PC-9 (cell line): ENCODE measurements at regions of chr19 and their contacts with region 1.

Region 1: GRCh38 chr19:8050274-8051096 is 2.1 kb upstream of the CCL25 start:
- DNase-seq: peak; percentile 59 to 76
- H3K4me3 ChIP-seq: no peak overlapping the region
- H3K27ac ChIP-seq: no peak overlapping the region
- H3K4me1 ChIP-seq: no peaks in the 10 kb centered on the region
- H3K27me3 ChIP-seq: peaks cover 10% of the 10 kb centered on the region
- CTCF ChIP-seq: no peak

Region 2: GRCh38 chr19:8028951-8029491 is 21.5 kb before region 1 on chr19:
- CTCF ChIA-PET with region 1: no interaction called
- POLR2A ChIA-PET with region 1: interaction called, 10 read pairs
- intact Hi-C with region 1: no loop called
- DNase-seq: no peak
- H3K4me3 ChIP-seq: no peak overlapping the region
- H3K27ac ChIP-seq: no peak overlapping the region
- H3K4me1 ChIP-seq: 0 out of 2 replicates have a peak, but pooled peaks cover 6% of the 10 kb centered on the region
- H3K27me3 ChIP-seq: no peaks in the 10 kb centered on the region
- CTCF ChIP-seq: no peak

Region 3: GRCh38 chr19:8180061-8180460 is 129.6 kb after region 1 on chr19:
- CTCF ChIA-PET with region 1: no interaction called
- POLR2A ChIA-PET with region 1: interaction called, 16 read pairs
- intact Hi-C with region 1: no loop called
- DNase-seq: no peak
- H3K4me3 ChIP-seq: no peak overlapping the region
- H3K27ac ChIP-seq: no peak overlapping the region
- H3K4me1 ChIP-seq: 0 out of 2 replicates have a peak, but pooled peaks cover 7% of the 10 kb centered on the region
- H3K27me3 ChIP-seq: no peaks in the 10 kb centered on the region
- CTCF ChIP-seq: no peak

Region 4: GRCh38 chr19:8252922-8253589 is 202.6 kb after region 1 on chr19:
- CTCF ChIA-PET with region 1: no interaction called
- POLR2A ChIA-PET with region 1: no interaction called
- intact Hi-C with region 1: no loop called
- DNase-seq: peak; percentile 65 to 79
- H3K4me3 ChIP-seq: no peak overlapping the region
- H3K27ac ChIP-seq: no peak overlapping the region
- H3K4me1 ChIP-seq: no peaks in the 10 kb centered on the region
- H3K27me3 ChIP-seq: no peaks in the 10 kb centered on the region
- CTCF ChIP-seq: peak; percentile 99